ENCODE measurements at regions of chr16 and their contacts with region 1.

Region 1: DNA sequence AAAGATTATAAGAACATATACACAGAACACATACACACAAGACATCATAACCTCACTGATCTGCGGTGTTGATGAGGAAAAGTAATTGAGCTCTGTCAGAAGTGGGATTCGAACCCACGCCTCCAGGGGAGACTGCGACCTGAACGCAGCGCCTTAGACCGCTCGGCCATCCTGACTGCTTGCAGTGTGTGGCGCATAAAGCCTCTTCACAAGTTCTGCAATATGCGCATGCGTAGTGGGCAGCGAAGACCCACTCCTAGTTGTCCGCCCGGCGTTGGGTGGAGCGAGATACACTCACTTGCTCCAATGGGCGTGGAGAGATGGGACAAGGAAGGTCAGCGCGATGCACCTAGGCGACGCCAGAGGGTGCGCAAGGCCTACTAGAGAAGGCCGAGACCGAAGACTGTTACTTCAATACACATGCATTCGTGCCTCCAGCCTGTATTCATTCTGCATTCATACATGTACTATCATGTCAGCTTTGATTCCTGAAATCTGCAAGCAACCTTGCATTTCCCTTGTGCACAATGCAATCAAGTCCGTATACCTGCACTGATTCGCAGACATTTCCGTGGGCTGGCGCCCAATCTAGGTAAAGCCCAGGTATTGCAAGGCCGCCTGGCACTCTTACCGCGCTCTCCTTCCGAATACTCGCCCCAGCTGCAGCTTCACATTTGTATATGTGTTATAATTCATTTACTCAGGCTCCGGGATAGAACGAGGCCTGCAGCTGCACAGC is 16.1 kb upstream of the PLLP start:
- DNase-seq: peak; percentile 96
- ATAC-seq: peak; percentile 86
- H3K4me3 ChIP-seq: peak overlapping the region; percentile 61 to 76
- H3K27ac ChIP-seq: peak overlapping the region; percentile 54; the same call in 1 of the 2 replicates
- H3K4me1 ChIP-seq: peaks cover 4% of the 10 kb centered on the region; the same call in 1 of the 2 replicates
- H3K27me3 ChIP-seq: no peaks in the 10 kb centered on the region
- CTCF ChIP-seq: peak; percentile 90

Region 2: GRCh38 chr16:56866943-56867830 is 433.4 kb before region 1 on chr16:
- CTCF ChIA-PET with region 1: no interaction called
- POLR2A ChIA-PET with region 1: no interaction called
- in situ Hi-C with region 1: no loop called
- intact Hi-C with region 1: loop called (anchors 10 kb)
- DNase-seq: no peak
- ATAC-seq: 0 out of 2 replicates have a peak, but pooled peaks have one; percentile 19
- H3K4me3 ChIP-seq: no peak overlapping the region
- H3K27ac ChIP-seq: peak overlapping the region; percentile 17; the same call in 1 of the 2 replicates
- H3K4me1 ChIP-seq: no peaks in the 10 kb centered on the region
- H3K27me3 ChIP-seq: no peaks in the 10 kb centered on the region
- CTCF ChIP-seq: peak; percentile 79

Region 3: DNA sequence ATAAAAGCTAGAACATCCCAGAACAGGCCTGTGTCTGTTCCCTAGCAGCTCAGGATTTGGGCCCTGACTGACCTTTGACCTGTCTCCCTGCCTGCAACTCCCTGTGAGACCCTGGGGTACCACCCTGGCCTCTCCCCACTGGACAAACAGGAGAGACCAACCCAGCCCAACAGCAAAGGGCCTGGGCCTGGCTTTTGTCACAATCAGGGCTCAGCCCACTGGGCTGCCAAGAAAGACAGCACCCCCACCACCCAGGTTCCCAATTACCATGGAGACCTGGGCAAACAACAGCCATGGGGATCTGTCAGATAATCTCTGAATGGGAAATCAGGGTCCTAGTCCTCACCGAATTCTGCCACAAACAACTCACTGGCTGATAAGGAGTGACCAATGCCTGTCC is 27.2 kb before region 1 on chr16:
- CTCF ChIA-PET with region 1: no interaction called
- POLR2A ChIA-PET with region 1: no interaction called
- in situ Hi-C with region 1: no loop called
- intact Hi-C with region 1: no loop called
- DNase-seq: no peak
- ATAC-seq: no peak
- H3K4me3 ChIP-seq: no peak overlapping the region
- H3K27ac ChIP-seq: no peak overlapping the region
- H3K4me1 ChIP-seq: no peaks in the 10 kb centered on the region
- H3K27me3 ChIP-seq: no peaks in the 10 kb centered on the region
- CTCF ChIP-seq: no peak

Region 4: GRCh38 chr16:57372372-57373116 is 72.0 kb after region 1 on chr16 and contains the start of gene CX3CL1:
- CTCF ChIA-PET with region 1: no interaction called
- POLR2A ChIA-PET with region 1: no interaction called
- in situ Hi-C with region 1: no loop called
- intact Hi-C with region 1: loop called (anchors 5 kb)
- DNase-seq: no peak
- ATAC-seq: peak; percentile 68
- H3K4me3 ChIP-seq: peak within 1 kb of the TSS; percentile 41 to 59
- H3K27ac ChIP-seq: peak within 1 kb of the TSS; percentile 69
- H3K4me1 ChIP-seq: peaks cover 31% of the 10 kb centered on the region
- H3K27me3 ChIP-seq: no peaks in the 10 kb centered on the region
- CTCF ChIP-seq: no peak
- total RNA-seq, gene CX3CL1: 21.8 TPM

Region 5: GRCh38 chr16:57416122-57416509 is 115.6 kb after region 1 on chr16:
- CTCF ChIA-PET with region 1: interaction called, 16 read pairs
- POLR2A ChIA-PET with region 1: no interaction called
- in situ Hi-C with region 1: no loop called
- intact Hi-C with region 1: loop called (anchors 1 kb)
- DNase-seq: no peak
- ATAC-seq: 0 out of 2 replicates have a peak, but pooled peaks have one; percentile 9
- H3K4me3 ChIP-seq: no peak overlapping the region
- H3K27ac ChIP-seq: no peak overlapping the region; the same call in 1 of the 2 replicates
- H3K4me1 ChIP-seq: peaks cover 16% of the 10 kb centered on the region
- H3K27me3 ChIP-seq: no peaks in the 10 kb centered on the region
- CTCF ChIP-seq: no peak

Region 6: GRCh38 chr16:57422026-57422944 is 121.7 kb after region 1 on chr16:
- CTCF ChIA-PET with region 1: interaction called, 16 read pairs
- POLR2A ChIA-PET with region 1: no interaction called
- in situ Hi-C with region 1: no loop called
- intact Hi-C with region 1: loop called (anchors 1 kb)
- DNase-seq: peak; percentile 42
- ATAC-seq: peak; percentile 66
- H3K4me3 ChIP-seq: 0 out of 4 replicates have a peak overlapping the region, but pooled peaks of 1 of the 2 experiments have one; percentile 11
- H3K27ac ChIP-seq: no peak overlapping the region
- H3K4me1 ChIP-seq: peaks cover 10% of the 10 kb centered on the region
- H3K27me3 ChIP-seq: no peaks in the 10 kb centered on the region
- CTCF ChIP-seq: peak; percentile 78

Region 7: DNA sequence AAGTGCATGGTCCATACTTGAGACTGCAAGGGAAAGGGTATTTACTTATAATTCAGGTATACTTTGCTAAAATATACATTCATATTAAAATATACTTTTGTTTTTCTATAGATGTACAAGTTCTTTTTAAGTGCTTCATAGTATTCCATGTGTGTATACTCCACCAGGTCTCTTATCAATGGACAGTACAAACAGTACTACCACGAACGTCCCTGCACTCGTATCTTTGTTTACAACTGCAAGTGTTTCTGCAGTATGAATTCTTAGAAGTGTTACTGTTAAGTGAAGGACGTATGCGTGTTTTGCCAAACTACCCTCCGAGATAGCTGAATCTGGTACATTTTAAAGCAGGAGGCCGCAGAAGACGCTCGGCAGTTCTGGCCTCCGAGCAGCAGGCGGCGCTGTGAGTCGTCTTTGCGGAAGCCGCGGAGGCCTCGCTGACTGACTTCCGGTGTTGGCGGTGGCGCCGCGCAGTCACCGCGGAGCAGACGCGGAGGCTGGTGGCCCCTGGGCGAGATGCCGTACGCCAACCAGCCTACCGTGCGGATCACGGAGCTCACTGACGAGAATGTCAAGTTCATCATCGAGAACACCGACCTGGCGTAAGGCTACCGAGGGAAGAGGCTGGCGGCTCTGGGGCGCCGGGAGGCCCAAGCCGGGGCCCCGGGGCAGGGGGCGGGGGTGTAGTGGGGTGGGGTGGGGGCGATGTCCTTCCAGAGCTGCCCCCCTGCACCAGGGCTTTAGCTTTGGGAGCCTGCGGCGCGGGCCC is 161.8 kb after region 1 on chr16 and contains the start of gene POLR2C:
- CTCF ChIA-PET with region 1: no interaction called
- POLR2A ChIA-PET with region 1: no interaction called
- in situ Hi-C with region 1: no loop called
- intact Hi-C with region 1: no loop called
- DNase-seq: peak; percentile 43
- ATAC-seq: peak; percentile 96
- H3K4me3 ChIP-seq: peak within 1 kb of the TSS; percentile 90 to 92
- H3K27ac ChIP-seq: peak within 1 kb of the TSS; percentile 81
- H3K4me1 ChIP-seq: 0 out of 2 replicates have a peak, but pooled peaks cover 2% of the 10 kb centered on the region
- H3K27me3 ChIP-seq: no peaks in the 10 kb centered on the region
- CTCF ChIP-seq: peak; percentile 93
- total RNA-seq, gene POLR2C: 53.9 TPM

Region 8: DNA sequence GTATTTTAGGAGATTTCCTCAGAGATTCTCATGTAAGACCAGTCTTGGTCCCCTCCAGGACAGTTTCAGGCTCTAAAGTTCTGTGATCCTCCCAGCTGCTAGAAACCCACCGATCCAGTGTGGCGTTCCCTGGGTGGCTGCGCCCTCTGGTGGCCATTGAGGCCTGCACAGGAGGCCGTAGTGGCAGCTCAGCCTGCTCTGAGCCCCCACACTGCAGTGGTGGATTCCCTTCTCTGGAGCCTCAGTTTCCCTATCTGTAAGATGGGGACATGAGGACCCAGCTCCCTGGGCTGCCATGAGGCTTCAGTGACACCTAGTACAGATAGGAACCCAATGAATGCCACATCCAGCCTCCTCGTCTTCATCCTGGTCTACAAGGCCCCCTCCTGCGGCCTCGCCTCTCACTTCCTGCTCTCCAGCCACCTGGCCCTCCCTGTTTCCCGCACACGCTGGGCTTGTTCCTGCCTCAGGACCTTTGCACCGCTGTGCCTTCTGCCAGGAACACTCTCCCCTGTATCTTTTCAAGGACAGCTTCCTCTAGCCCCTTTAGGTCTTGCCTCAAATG is 219.3 kb after region 1 on chr16:
- CTCF ChIA-PET with region 1: no interaction called
- POLR2A ChIA-PET with region 1: no interaction called
- in situ Hi-C with region 1: no loop called
- intact Hi-C with region 1: loop called (anchors 5 kb)
- DNase-seq: peak; percentile 36
- ATAC-seq: peak; percentile 93
- H3K4me3 ChIP-seq: no peak overlapping the region
- H3K27ac ChIP-seq: no peak overlapping the region
- H3K4me1 ChIP-seq: no peaks in the 10 kb centered on the region
- H3K27me3 ChIP-seq: no peaks in the 10 kb centered on the region
- CTCF ChIP-seq: peak; percentile 93

Region 9: GRCh38 chr16:58336332-58337089 is 1036.0 kb after region 1 on chr16:
- CTCF ChIA-PET with region 1: no interaction called
- POLR2A ChIA-PET with region 1: no interaction called
- in situ Hi-C with region 1: no loop called
- intact Hi-C with region 1: no loop called
- DNase-seq: peak; percentile 74
- ATAC-seq: peak; percentile 88
- H3K4me3 ChIP-seq: peak overlapping the region in 1 of 2 experiments; percentile 26; a peak in 1 of 4 replicates
- H3K27ac ChIP-seq: no peak overlapping the region
- H3K4me1 ChIP-seq: 0 out of 2 replicates have a peak, but pooled peaks cover 5% of the 10 kb centered on the region
- H3K27me3 ChIP-seq: no peaks in the 10 kb centered on the region
- CTCF ChIP-seq: peak; percentile 89

Region 10: DNA sequence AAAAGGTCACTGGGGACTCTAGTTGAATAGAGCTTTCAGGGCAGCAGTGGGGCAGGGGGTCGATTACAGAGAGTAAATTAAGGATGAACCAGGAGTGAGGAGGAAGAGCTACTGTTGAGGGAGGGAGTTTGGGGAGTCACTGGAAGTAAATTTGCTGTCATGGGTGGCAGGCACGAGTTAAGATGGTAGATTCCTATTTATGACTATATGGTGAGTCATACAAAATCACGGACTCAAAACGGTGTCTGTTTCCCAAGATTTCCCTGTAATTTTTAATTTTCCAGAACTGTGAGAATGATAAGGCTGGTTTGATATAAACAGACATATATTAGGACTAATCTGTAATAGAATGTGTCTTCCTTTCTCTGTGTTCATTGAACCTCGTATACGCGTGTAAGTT is 1721.2 kb after region 1 on chr16:
- CTCF ChIA-PET with region 1: no interaction called
- POLR2A ChIA-PET with region 1: no interaction called
- in situ Hi-C with region 1: no loop called
- intact Hi-C with region 1: loop called (anchors 10 kb)
- DNase-seq: no peak
- ATAC-seq: no peak
- H3K4me3 ChIP-seq: no peak overlapping the region
- H3K27ac ChIP-seq: no peak overlapping the region
- H3K4me1 ChIP-seq: no peaks in the 10 kb centered on the region
- H3K27me3 ChIP-seq: no peaks in the 10 kb centered on the region
- CTCF ChIP-seq: no peak